Activated CD8-positive, alpha-beta T cell treated with anti-CD3 and anti-CD28 coated beads, Interleukin-2, amount 10 ng/mL, durations not matched to agents 7 days and 5 days (primary cell): ENCODE measurements at regions of chr6 and their contacts with region 1.

Region 1: GRCh38 chr6:90285611-90286381 is 10.8 kb downstream of the BACH2 start:
- DNase-seq: peak; percentile 73
- ATAC-seq: peak; percentile 60
- H3K4me3 Mint-ChIP-seq: peak overlapping the region; percentile 75
- H3K27ac Mint-ChIP-seq: peak overlapping the region; percentile 78
- H3K4me1 Mint-ChIP-seq: peaks cover 89% of the 10 kb centered on the region
- H3K27me3 Mint-ChIP-seq: no peaks in the 10 kb centered on the region

Region 2: DNA sequence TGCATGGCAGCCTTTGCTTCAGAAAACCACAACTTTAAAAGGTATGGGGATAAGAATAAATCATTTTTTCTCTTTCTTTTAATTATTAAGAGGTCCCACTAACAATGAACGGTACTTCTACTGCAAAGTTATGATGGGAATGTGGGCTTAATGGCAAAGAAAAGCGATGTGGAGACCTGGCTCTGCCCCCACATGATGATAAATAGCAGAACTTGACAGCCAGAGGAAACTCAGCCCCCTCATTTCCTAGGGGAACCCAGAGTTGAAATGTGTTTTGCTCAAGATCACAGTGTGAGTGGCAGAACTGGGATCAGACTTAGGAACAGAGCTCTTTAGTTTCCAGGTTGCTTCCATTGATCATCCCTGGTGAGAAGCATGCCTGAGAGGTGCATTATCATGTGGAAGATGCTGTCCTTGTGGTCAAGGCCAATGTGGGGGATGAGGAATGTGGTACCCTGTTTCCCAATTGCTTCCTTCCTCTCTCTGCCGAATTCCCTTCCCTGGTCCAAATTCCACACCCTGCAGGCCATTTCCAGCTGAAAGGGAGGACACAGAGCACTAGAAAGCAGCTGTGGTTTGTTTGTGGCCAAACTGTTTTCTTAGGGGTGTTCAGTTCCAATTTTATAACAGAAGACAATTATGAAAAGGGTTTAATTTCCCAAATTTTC is 55.1 kb before region 1 on chr6:
- CTCF ChIA-PET with region 1: interaction called, 4 read pairs
- POLR2A ChIA-PET with region 1: interaction called, 12 read pairs
- DNase-seq: no peak
- ATAC-seq: no peak
- H3K4me3 Mint-ChIP-seq: peak overlapping the region; percentile 20
- H3K27ac Mint-ChIP-seq: peak overlapping the region; percentile 75
- H3K4me1 Mint-ChIP-seq: peaks cover 95% of the 10 kb centered on the region
- H3K27me3 Mint-ChIP-seq: no peaks in the 10 kb centered on the region

Region 3: GRCh38 chr6:90274451-90275030 is 11.3 kb before region 1 on chr6:
- CTCF ChIA-PET with region 1: interaction called, 31 read pairs
- POLR2A ChIA-PET with region 1: interaction called, 48 read pairs
- DNase-seq: peak; percentile 94
- ATAC-seq: peak; percentile 87
- H3K4me3 Mint-ChIP-seq: peak overlapping the region; percentile 75
- H3K27ac Mint-ChIP-seq: peak overlapping the region; percentile 94
- H3K4me1 Mint-ChIP-seq: peaks cover 91% of the 10 kb centered on the region
- H3K27me3 Mint-ChIP-seq: no peaks in the 10 kb centered on the region

Region 4: DNA sequence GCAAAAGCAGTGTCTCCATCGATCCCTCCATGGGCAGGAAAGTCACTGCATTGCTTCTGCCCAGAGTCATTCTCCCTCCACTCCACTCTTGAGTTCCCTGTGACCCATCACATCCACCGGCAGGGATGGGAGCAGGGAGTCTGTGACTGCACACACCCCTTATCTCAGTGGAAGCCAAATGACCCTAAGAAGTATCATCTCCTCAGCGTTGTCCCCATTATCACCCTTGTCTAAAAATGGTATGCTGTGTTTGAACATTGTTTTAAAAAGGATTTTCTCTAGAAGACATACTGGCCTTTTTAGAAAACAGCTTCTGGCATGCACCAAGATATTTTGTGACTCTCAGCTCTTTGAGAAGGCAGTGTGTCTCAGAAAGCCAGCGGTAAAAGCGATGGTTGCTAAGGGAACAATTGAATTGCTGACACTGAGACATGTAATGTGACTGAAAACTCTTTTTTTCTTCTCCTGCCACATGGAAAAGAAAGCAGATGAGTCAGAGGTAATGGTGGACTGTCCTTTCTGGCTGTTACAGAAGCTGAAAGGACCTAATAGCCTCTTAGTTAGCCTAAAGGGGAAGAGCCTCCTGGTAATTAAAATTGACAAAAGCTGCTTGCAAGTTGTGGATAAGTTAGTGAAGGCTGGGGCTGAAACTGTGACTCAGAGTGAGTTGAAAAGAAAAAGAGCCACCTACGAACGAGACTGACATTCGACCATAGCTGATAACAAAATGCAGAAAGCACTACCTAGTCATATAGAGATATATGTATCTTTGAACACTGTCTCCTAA is 180.6 kb after region 1 on chr6:
- CTCF ChIA-PET with region 1: interaction called, 253 read pairs
- POLR2A ChIA-PET with region 1: interaction called, 8 read pairs
- DNase-seq: no peak
- ATAC-seq: peak; percentile 31
- H3K4me3 Mint-ChIP-seq: peak overlapping the region; percentile 13
- H3K27ac Mint-ChIP-seq: peak overlapping the region; percentile 71
- H3K4me1 Mint-ChIP-seq: peaks cover 88% of the 10 kb centered on the region
- H3K27me3 Mint-ChIP-seq: peaks cover 3% of the 10 kb centered on the region